Calu3 (cell line): ENCODE measurements at regions of chr5 and their contacts with region 1.

Region 1: GRCh38 chr5:66144074-66144833 is at the start of gene SREK1:
- DNase-seq: peak; percentile 94
- H3K4me3 Mint-ChIP-seq: peak within 1 kb of the TSS; percentile 84
- H3K27ac Mint-ChIP-seq: peak within 1 kb of the TSS; percentile 88
- H3K4me1 Mint-ChIP-seq: no peaks in the 10 kb centered on the region
- H3K27me3 Mint-ChIP-seq: no peaks in the 10 kb centered on the region
- CTCF ChIP-seq: no peak
- total RNA-seq, gene SREK1: 99.6 and 102 TPM in 2 replicates

Region 2: DNA sequence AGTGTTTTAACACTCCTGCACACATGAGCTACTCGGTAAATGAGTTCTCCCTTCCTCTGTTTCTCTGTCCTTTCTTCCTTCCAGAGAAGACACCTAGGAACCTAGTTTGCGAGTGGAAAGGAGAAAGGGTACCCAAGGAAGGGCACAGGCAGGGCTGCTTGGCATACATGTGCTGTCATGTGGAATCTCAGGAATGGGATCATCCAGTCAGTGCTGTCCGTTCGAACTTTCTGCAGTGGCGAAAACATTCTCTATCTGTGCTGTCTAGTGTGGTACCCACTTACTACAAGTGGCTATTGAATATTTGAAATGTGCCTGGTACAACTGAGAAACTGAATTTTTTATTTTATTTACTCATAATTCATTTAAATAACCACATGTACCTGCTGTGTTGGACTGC is 394.3 kb before region 1 on chr5:
- CTCF ChIA-PET with region 1: no interaction called
- intact Hi-C with region 1: loop called (anchors 10 kb)
- DNase-seq: no peak
- H3K4me3 Mint-ChIP-seq: no peak overlapping the region
- H3K27ac Mint-ChIP-seq: no peak overlapping the region
- H3K4me1 Mint-ChIP-seq: peaks cover 42% of the 10 kb centered on the region
- H3K27me3 Mint-ChIP-seq: no peaks in the 10 kb centered on the region
- CTCF ChIP-seq: no peak